Calu3 (cell line): ENCODE measurements at regions of chr12 and their contacts with region 1.

Region 1: GRCh38 chr12:24833513-24833912 is 115.4 kb downstream of the BCAT1 start:
- DNase-seq: no peak
- H3K4me3 Mint-ChIP-seq: no peak overlapping the region
- H3K27ac Mint-ChIP-seq: no peak overlapping the region
- H3K4me1 Mint-ChIP-seq: no peaks in the 10 kb centered on the region
- H3K27me3 Mint-ChIP-seq: no peaks in the 10 kb centered on the region
- CTCF ChIP-seq: no peak

Region 2: GRCh38 chr12:24586293-24586692 is 247.2 kb before region 1 on chr12:
- CTCF ChIA-PET with region 1: no interaction called
- intact Hi-C with region 1: loop called (anchors 5 kb)
- DNase-seq: no peak
- H3K4me3 Mint-ChIP-seq: no peak overlapping the region
- H3K27ac Mint-ChIP-seq: no peak overlapping the region
- H3K4me1 Mint-ChIP-seq: no peaks in the 10 kb centered on the region
- H3K27me3 Mint-ChIP-seq: no peaks in the 10 kb centered on the region
- CTCF ChIP-seq: no peak